SK-N-SH (cell line): ENCODE measurements at regions of chr13 and their contacts with region 1.

Region 1: DNA sequence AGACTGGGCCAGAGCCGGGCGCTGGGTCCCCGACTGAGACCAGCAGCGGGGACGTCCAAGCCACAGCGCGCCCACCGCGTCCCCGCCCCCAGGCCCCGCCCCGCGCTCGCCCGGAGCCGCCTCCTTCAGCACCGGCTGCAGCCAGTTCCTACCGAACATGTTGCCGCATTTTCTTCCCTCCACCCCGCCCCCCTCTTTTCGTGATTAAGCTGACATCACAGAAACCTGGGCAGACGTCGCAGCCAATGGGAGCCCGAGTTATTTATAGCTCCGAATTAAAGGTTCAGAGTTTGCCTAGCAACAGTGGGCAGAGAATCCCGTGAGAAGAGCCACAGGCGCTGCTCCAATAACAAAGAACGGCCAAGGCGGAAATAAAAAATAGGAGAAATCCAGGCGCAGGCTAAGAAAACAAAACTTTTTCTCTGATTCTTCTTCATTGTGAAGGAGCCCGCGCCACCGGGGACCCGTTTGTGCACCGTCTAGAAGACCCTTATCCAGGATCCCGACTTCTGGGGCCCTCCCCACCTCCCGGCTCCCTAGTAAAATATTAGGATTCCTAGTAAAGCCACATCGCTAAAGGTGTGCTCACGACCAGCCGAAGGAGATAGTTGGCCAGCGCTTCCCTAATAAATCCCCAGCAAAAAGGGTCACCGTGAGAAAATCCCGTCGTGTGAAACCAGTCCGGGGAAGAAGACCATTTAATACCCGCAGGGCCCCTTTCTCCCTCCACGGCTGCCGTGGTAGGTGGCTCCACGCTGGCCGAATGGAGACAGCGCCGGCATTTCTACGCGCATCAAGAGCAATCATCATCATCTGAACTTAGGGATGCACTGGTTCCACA is 61.7 kb downstream of the SERP2 start:
- DNase-seq: peak; percentile 93
- H3K4me3 ChIP-seq: peak overlapping the region; percentile 83 to 92
- H3K27ac ChIP-seq: peak overlapping the region; percentile 94 to 98
- H3K4me1 ChIP-seq: peaks cover 17 to 28% of the 10 kb centered on the region in 2 experiments; a peak in 3 of 4 replicates
- H3K27me3 ChIP-seq: no peaks in the 10 kb centered on the region
- CTCF ChIP-seq: no peak
- EP300 ChIP-seq: peak; percentile 43 to 91; a peak in 2 of 4 replicates
- RAD21 ChIP-seq: peak; percentile 22

Region 2: DNA sequence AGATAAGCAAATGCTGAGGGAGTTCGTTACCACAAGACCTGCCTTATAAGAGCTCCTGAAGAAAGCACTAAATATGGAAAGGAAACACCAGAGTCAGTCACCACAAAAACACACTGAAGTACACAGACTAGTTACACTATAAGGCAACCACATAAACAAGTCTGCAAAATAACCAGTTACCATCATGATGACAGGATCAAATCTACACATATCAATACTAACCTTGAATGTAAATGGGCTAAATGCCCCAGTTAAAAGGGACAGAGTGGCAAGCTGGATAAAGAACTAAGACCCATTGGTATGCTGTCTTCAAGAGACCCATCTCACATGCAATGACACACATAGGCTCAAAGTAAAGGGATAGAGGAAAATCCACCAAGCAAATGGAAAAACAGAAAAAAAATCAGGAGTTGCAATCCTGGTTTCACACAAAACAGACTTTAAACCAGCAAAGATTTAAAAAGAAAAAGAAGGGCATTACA is 582.4 kb before region 1 on chr13:
- CTCF ChIA-PET with region 1: no interaction called
- POLR2A ChIA-PET with region 1: no interaction called
- DNase-seq: no peak
- H3K4me3 ChIP-seq: no peak overlapping the region
- H3K27ac ChIP-seq: no peak overlapping the region
- H3K4me1 ChIP-seq: peaks cover 0 to 4% of the 10 kb centered on the region in 2 experiments; a peak in 1 of 4 replicates
- H3K27me3 ChIP-seq: no peaks in the 10 kb centered on the region
- CTCF ChIP-seq: no peak
- EP300 ChIP-seq: no peak
- RAD21 ChIP-seq: no peak

Region 3: DNA sequence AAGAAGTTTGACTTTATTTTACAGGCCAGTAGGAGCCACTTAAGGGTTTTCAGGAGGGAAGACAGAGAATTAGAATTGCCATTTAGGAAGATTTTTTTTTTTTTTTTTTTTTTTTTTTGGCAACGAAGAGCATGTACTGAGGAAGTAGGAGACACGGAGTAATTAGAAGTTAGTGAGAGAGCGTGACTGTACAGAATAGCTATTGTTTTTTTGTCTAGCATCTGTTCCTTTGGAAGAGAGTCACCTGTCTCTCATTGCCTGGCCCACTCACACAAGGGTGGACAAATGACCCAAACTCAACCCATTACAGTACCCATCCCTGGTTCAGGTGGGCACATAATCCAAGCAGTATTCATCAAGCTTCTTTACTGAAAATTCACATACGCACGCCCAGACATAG is 388.9 kb before region 1 on chr13:
- CTCF ChIA-PET with region 1: interaction called, 13 read pairs
- POLR2A ChIA-PET with region 1: interaction called, 8 read pairs
- DNase-seq: no peak
- H3K4me3 ChIP-seq: no peak overlapping the region
- H3K27ac ChIP-seq: no peak overlapping the region
- H3K4me1 ChIP-seq: peaks cover 0 to 6% of the 10 kb centered on the region in 2 experiments; a peak in 1 of 4 replicates
- H3K27me3 ChIP-seq: no peaks in the 10 kb centered on the region
- CTCF ChIP-seq: no peak
- EP300 ChIP-seq: no peak
- RAD21 ChIP-seq: no peak

Region 4: DNA sequence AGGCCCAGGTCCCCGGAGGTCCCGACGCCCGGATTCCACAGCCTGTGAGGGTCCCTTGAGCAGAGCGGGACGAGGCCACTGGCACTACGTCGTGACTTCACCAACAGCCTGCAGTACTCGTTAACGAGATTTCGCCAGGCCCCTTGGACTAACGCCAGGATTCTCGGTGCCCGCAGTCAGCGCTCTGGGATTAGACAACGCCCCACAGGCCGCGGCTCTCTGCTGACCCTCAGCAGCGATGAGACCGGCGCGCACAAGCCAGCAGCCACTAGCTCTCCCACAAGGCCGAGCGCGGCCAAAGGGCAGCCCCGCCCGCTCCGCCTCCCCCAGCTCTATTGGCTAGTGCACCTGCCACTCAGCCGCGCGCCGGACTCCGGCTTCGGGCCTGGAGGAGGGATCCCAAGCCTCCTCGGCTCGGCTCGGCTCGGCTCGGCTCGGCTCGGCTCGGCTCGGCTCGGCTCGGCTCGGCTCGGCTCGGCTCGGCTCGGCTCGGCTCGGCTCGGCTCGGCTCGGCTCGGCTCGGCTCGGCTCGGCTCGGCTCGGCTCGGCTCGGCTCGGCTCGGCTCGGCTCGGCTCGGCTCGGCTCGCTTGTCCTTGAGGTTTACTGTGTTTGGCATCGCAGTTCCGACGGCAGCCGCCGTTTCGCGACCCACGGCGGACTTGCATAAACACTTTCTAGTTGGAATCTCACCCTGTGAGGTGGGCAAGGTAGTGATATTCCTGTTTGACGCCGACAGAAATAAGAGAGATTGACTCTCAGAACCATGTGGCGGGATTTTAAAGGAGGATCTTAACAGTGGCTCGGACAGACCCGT is 293.4 kb before region 1 on chr13:
- CTCF ChIA-PET with region 1: interaction called, 9 read pairs
- POLR2A ChIA-PET with region 1: interaction called, 11 read pairs
- DNase-seq: peak; percentile 100
- H3K4me3 ChIP-seq: peak overlapping the region; percentile 61 to 69
- H3K27ac ChIP-seq: peak overlapping the region; percentile 89 to 94
- H3K4me1 ChIP-seq: peaks cover 0 to 16% of the 10 kb centered on the region in 2 experiments; a peak in 2 of 4 replicates
- H3K27me3 ChIP-seq: no peaks in the 10 kb centered on the region
- CTCF ChIP-seq: no peak
- EP300 ChIP-seq: peak in 1 of 2 experiments; percentile 25; a peak in 1 of 4 replicates
- RAD21 ChIP-seq: peak; percentile 45

Region 5: DNA sequence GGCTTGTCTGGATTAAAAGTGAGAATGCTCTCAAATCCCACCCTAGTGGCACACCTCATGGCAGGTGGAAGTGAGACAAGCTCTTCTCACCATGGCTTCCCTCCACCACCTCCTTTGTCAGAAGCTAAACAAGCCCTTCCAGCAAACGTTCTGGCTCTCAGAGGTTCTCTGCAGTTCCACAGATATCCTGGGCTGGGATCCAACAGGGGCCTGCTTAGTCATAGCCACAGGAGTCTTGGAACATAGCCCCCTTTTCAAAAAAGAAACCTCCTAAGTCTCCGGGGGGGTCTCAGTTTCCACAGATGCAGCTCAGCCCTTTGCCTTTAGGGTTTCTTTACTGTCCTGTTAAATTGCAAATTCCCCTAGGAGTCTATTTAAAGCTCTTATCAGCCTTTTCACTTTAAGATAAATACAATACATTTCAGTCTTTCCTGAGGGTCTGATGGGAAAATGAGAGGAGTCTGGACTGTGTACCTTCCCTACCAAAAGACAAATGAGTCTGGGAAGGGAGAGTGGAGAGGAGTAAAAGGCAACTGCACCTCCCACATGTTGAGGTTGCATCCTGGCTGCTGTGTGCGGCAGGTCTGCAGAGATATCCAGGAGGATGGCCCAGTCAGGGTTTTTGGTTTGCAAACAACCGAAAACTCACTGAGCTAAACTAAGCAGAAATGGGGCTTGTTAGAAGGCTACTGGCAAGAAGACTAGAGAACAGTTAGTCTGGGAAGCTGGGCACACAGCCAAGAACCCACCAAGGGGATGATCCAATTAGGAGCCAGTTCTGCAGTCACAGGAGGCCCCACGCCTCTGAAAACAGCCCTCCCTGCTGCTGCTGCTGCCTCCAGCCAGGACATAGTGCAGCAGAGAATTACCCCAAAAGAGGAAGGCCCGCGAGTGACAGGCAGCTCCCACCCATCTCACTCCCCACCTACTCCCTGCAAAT is 103.2 kb before region 1 on chr13:
- CTCF ChIA-PET with region 1: interaction called, 11 read pairs
- POLR2A ChIA-PET with region 1: interaction called, 32 read pairs
- DNase-seq: peak; percentile 72
- H3K4me3 ChIP-seq: peak overlapping the region in 1 of 2 experiments; percentile 31; a peak in 1 of 4 replicates
- H3K27ac ChIP-seq: peak overlapping the region; percentile 90 to 98
- H3K4me1 ChIP-seq: peaks cover 22 to 40% of the 10 kb centered on the region in 2 experiments
- H3K27me3 ChIP-seq: no peaks in the 10 kb centered on the region
- CTCF ChIP-seq: no peak; the same call in 1 of the 2 replicates
- EP300 ChIP-seq: peak; percentile 55 to 60; a peak in 2 of 4 replicates
- RAD21 ChIP-seq: 0 out of 2 replicates have a peak, but pooled peaks have one; percentile 22

Region 6: GRCh38 chr13:44373601-44374348 is 61.6 kb before region 1 on chr13 and contains the start of gene SERP2:
- CTCF ChIA-PET with region 1: interaction called, 5 read pairs
- POLR2A ChIA-PET with region 1: interaction called, 22 read pairs
- DNase-seq: peak; percentile 97
- H3K4me3 ChIP-seq: peak within 1 kb of the TSS; percentile 49 to 53
- H3K27ac ChIP-seq: peak within 1 kb of the TSS in 1 of 2 experiments; percentile 78; a peak in 2 of 4 replicates
- H3K4me1 ChIP-seq: peaks cover 0 to 32% of the 10 kb centered on the region in 2 experiments; a peak in 2 of 4 replicates
- H3K27me3 ChIP-seq: no peaks in the 10 kb centered on the region
- CTCF ChIP-seq: no peak
- EP300 ChIP-seq: no peak
- RAD21 ChIP-seq: no peak; the same call in none of the 2 replicates
- polyA plus RNA-seq, gene SERP2: 4.9 and 6.2 TPM in 2 replicates

Region 7: DNA sequence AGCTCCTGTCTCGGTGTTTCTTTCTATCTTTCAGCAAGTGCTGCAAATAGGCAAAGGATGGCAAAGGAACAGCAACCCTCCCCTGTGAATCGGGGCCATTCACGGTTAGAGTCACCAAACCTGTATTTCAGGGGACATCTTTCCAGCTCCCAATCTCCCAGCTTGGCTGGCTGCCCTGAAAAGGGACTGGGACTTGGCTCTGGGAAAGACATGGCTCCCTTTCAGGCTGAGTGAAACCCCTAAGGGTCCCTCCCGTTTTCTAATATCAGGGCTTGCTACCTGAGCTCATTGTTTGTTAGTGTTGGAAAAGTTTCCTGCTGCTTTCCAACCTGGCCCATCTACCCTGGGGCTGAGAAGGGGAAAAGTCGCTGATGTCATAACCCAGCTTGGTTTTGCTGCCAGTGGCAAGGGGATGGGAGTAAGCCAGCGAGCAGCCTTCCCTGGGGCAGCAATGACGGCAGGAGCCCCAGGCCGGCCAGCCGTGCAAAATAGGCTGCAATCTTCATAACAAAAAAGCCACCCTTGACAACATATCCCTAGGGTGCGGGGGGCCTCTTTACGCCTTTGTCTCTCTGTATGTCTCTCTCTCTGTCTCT is 31.8 kb before region 1 on chr13:
- CTCF ChIA-PET with region 1: interaction called, 4 read pairs
- POLR2A ChIA-PET with region 1: interaction called, 59 read pairs
- DNase-seq: no peak
- H3K4me3 ChIP-seq: no peak overlapping the region
- H3K27ac ChIP-seq: peak overlapping the region in 1 of 2 experiments; percentile 96; a peak in 2 of 4 replicates
- H3K4me1 ChIP-seq: peaks cover 0 to 41% of the 10 kb centered on the region in 2 experiments; a peak in 2 of 4 replicates
- H3K27me3 ChIP-seq: no peaks in the 10 kb centered on the region
- CTCF ChIP-seq: no peak
- EP300 ChIP-seq: no peak
- RAD21 ChIP-seq: no peak